Activated CD4-positive, alpha-beta T cell treated with anti-CD3 and anti-CD28 coated beads for 36 hours (primary cell): ENCODE measurements at regions of chr1 and their contacts with region 1.

Region 1: DNA sequence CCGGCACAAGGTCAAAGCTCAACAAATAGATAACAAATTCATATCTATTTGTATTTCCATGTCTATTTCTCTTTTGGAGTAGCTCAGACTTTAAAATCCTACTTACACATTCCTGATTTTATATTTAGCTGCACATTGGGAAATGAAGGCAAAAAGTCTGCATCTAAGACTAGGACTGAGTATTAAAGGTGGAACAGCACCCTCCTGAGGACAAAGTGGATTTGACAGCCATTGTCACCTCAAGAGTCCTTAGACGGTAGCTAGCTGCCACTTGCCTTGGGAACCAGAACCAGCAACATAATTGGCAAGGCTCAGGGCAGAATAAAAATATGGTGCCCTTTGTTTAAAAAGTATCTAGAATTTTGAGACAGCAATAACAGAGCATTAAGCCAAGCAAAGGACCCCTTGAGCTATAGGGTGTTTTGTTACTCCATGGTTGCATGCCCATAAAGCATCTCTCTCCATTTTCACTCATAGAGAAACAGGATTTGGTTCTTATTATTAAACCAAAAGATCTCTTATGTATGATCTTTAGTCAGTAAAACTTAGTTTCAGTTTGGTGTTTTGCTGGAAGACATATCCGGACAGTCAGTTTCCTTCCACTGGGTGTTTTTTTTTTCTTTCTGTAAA is 30.0 kb upstream of the SGIP1 start:
- DNase-seq: peak; percentile 65
- ATAC-seq: no peak
- H3K4me3 Mint-ChIP-seq: no peak overlapping the region
- H3K27ac Mint-ChIP-seq: no peak overlapping the region
- H3K4me1 Mint-ChIP-seq: no peaks in the 10 kb centered on the region
- H3K27me3 Mint-ChIP-seq: peaks cover 14% of the 10 kb centered on the region

Region 2: DNA sequence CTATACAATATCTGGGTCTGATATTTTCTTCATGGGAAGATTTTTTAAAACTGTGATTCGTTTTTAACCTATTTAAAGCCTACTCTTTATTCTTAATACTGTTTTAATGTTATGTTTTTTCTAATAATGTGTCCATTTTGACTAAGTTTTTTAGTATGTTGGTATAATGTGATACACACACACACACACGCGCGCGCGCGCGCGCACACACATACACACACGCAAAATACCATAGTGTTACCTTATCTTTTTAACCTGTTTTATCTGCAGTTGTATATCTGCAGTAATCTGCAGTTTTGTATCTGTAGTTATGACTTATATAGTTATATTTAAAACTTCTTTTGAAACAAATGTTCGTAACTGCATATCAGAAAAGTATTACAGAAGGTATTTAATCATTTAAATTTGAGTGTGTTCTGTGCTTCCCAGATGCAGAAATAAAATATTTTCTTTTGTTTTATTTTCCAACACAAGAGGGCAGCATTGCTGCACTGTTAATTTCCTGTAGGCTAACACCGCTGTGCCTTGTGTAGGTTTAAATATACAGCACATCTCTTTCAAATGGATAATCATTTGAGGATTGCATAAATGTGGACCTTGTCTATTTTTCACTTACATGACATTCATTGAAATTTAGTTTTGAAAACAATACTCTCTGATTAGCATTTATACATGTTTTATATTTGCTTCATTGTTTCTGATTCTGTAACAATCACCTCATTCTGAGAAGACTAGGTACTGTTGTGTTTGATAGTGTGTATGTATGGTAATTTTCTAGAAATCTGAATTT is 545.2 kb before region 1 on chr1:
- CTCF ChIA-PET with region 1: interaction called, 8 read pairs
- POLR2A ChIA-PET with region 1: no interaction called
- intact Hi-C with region 1: loop called (anchors 1 to 2 kb)
- DNase-seq: peak; percentile 23
- ATAC-seq: peak; percentile 70
- H3K4me3 Mint-ChIP-seq: no peak overlapping the region
- H3K27ac Mint-ChIP-seq: no peak overlapping the region
- H3K4me1 Mint-ChIP-seq: no peaks in the 10 kb centered on the region
- H3K27me3 Mint-ChIP-seq: no peaks in the 10 kb centered on the region

Region 3: GRCh38 chr1:66253330-66253921 is 250.5 kb before region 1 on chr1:
- CTCF ChIA-PET with region 1: interaction called, 14 read pairs
- POLR2A ChIA-PET with region 1: no interaction called
- intact Hi-C with region 1: loop called in 1 of 2 experiments (anchors 5 kb)
- DNase-seq: no peak
- ATAC-seq: peak; percentile 81
- H3K4me3 Mint-ChIP-seq: no peak overlapping the region
- H3K27ac Mint-ChIP-seq: no peak overlapping the region
- H3K4me1 Mint-ChIP-seq: peaks cover 49% of the 10 kb centered on the region
- H3K27me3 Mint-ChIP-seq: no peaks in the 10 kb centered on the region

Region 4: GRCh38 chr1:66282343-66282852 is 221.6 kb before region 1 on chr1:
- CTCF ChIA-PET with region 1: no interaction called
- POLR2A ChIA-PET with region 1: no interaction called
- intact Hi-C with region 1: no loop called
- DNase-seq: peak; percentile 82
- ATAC-seq: peak; percentile 80
- H3K4me3 Mint-ChIP-seq: peak overlapping the region; percentile 29
- H3K27ac Mint-ChIP-seq: peak overlapping the region; percentile 90
- H3K4me1 Mint-ChIP-seq: peaks cover 93% of the 10 kb centered on the region
- H3K27me3 Mint-ChIP-seq: no peaks in the 10 kb centered on the region

Region 5: GRCh38 chr1:66439031-66439740 is 64.8 kb before region 1 on chr1:
- CTCF ChIA-PET with region 1: no interaction called
- POLR2A ChIA-PET with region 1: no interaction called
- intact Hi-C with region 1: no loop called
- DNase-seq: no peak
- ATAC-seq: peak; percentile 23
- H3K4me3 Mint-ChIP-seq: no peak overlapping the region
- H3K27ac Mint-ChIP-seq: peak overlapping the region; percentile 77
- H3K4me1 Mint-ChIP-seq: peaks cover 50% of the 10 kb centered on the region
- H3K27me3 Mint-ChIP-seq: no peaks in the 10 kb centered on the region

Region 6: DNA sequence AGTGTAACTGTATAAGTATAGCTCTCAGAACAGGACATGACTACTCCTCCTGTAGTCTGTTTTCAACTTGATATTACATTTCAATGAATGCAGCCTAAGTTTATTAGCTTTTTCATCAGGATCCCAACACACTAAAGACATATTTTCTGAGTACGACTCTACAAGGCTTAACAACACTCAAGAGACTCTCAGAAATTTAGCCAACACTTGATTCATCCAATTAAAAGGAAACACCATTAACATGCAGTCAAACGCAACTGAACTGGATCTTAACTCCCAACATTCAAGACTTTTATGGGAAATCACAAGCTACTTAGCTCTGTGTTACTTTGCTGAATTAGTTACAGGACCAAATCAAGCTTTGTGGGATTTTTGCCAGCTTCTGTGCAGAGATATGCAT is 35.2 kb before region 1 on chr1:
- CTCF ChIA-PET with region 1: interaction called, 11 read pairs
- POLR2A ChIA-PET with region 1: no interaction called
- intact Hi-C with region 1: no loop called
- DNase-seq: no peak
- ATAC-seq: no peak
- H3K4me3 Mint-ChIP-seq: no peak overlapping the region
- H3K27ac Mint-ChIP-seq: no peak overlapping the region
- H3K4me1 Mint-ChIP-seq: no peaks in the 10 kb centered on the region
- H3K27me3 Mint-ChIP-seq: peaks cover 5% of the 10 kb centered on the region

Region 7: GRCh38 chr1:66490816-66491215 is 13.1 kb before region 1 on chr1:
- CTCF ChIA-PET with region 1: interaction called, 11 read pairs
- POLR2A ChIA-PET with region 1: no interaction called
- intact Hi-C with region 1: no loop called
- DNase-seq: no peak
- ATAC-seq: no peak
- H3K4me3 Mint-ChIP-seq: no peak overlapping the region
- H3K27ac Mint-ChIP-seq: no peak overlapping the region
- H3K4me1 Mint-ChIP-seq: no peaks in the 10 kb centered on the region
- H3K27me3 Mint-ChIP-seq: no peaks in the 10 kb centered on the region

Region 8: GRCh38 chr1:66519988-66520387 is 16.0 kb after region 1 on chr1:
- CTCF ChIA-PET with region 1: interaction called, 11 read pairs
- POLR2A ChIA-PET with region 1: no interaction called
- intact Hi-C with region 1: no loop called
- DNase-seq: no peak
- ATAC-seq: no peak
- H3K4me3 Mint-ChIP-seq: no peak overlapping the region
- H3K27ac Mint-ChIP-seq: no peak overlapping the region
- H3K4me1 Mint-ChIP-seq: no peaks in the 10 kb centered on the region
- H3K27me3 Mint-ChIP-seq: peaks cover 3% of the 10 kb centered on the region

Region 9: DNA sequence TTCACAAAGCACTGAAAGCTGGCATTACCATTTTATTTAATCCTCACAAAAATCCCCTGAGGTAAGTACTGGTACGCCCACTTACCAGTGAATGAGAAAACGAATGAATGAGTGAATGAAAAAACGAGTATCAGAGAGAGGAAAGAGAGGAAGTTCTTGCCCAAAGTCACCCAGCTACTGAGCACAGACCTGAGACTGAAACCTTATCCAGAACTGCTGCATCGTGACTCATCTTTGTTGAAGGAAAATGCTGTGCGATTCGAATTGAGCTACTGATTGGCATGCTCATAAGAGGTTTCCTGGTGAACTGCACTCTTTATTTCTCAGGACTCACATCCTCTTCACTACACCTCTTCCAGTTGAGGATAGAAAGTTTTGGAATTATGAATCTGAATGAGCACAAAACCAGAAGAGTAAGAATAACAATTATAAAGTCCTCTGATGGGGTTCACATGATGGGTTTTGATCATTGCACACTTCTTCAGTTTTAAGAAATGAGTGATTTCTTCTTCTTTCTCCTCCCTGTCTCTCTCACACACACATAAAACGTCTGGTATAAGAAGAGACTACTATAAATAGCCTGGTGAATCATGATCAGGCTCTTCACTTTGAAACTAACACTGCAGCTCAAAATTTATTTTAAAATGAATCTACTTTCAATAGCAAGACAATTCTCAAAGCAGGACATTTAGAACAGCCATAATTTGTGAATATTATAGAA is 835.8 kb after region 1 on chr1:
- CTCF ChIA-PET with region 1: no interaction called
- POLR2A ChIA-PET with region 1: no interaction called
- intact Hi-C with region 1: no loop called
- DNase-seq: peak; percentile 67
- ATAC-seq: peak; percentile 67
- H3K4me3 Mint-ChIP-seq: peak overlapping the region; percentile 40
- H3K27ac Mint-ChIP-seq: peak overlapping the region; percentile 94
- H3K4me1 Mint-ChIP-seq: peaks cover 87% of the 10 kb centered on the region
- H3K27me3 Mint-ChIP-seq: no peaks in the 10 kb centered on the region